A673 (cell line): ENCODE measurements at regions of chr18 and their contacts with region 1.

Region 1: DNA sequence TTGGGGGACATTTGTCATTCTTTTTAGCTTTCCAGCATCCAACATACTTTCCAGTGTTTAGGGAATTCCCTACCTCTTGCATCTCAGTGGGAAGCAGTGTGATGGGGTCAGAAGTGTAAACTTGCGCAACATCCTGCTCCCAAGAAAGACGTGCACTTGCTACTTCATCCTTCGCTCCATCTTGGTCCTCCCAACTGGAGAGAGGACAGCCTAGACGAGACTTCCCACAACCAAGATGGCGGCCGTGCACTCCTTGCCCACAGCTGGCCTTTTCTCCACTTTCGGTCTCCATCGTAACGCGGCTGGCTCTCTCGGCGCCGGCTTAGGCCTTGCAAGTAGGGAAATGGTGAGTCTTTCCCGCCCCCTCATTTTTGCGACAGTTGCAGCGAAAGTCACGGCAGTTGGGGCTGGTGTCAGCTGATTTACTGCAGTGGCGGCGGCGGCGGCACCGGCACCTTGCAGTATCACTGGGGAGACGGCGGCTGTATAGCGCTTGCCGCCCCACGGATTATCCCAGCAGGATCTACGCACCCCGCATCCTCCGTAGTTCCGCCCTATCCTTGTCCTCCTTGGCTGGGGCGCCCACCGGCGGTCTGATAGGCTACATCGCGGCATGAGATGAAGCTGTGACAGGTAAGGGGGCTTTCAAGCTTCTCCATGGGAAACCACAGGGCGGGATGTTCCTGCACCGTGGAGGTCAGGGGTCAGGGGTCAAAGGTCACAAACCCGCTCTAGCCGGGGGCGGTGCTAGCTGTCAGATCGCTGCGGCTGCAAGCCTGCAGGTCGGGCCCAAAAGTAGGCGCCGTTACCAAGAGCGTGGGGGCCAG is at the start of gene WDR7:
- DNase-seq: peak; percentile 100
- H3K4me3 ChIP-seq: peak within 1 kb of the TSS; percentile 87
- H3K27ac ChIP-seq: peak within 1 kb of the TSS; percentile 73
- H3K4me1 ChIP-seq: no peaks in the 10 kb centered on the region
- H3K27me3 ChIP-seq: no peaks in the 10 kb centered on the region
- CTCF ChIP-seq: no peak
- total RNA-seq, gene WDR7: 21.2 and 24.3 TPM in 2 replicates

Region 2: GRCh38 chr18:56691530-56691929 is 40.4 kb after region 1 on chr18:
- CTCF ChIA-PET with region 1: no interaction called
- POLR2A ChIA-PET with region 1: interaction called, 12 read pairs
- intact Hi-C with region 1: no loop called
- DNase-seq: no peak
- H3K4me3 ChIP-seq: no peak overlapping the region
- H3K27ac ChIP-seq: no peak overlapping the region
- H3K4me1 ChIP-seq: no peaks in the 10 kb centered on the region
- H3K27me3 ChIP-seq: no peaks in the 10 kb centered on the region
- CTCF ChIP-seq: no peak

Region 3: GRCh38 chr18:57376503-57376902 is 725.3 kb after region 1 on chr18:
- CTCF ChIA-PET with region 1: no interaction called
- POLR2A ChIA-PET with region 1: no interaction called
- intact Hi-C with region 1: no loop called
- DNase-seq: no peak
- H3K4me3 ChIP-seq: no peak overlapping the region
- H3K27ac ChIP-seq: no peak overlapping the region
- H3K4me1 ChIP-seq: no peaks in the 10 kb centered on the region
- H3K27me3 ChIP-seq: peaks cover 57% of the 10 kb centered on the region
- CTCF ChIP-seq: no peak